ENCODE measurements at regions of chr9 and their contacts with region 1.

Region 1: GRCh38 chr9:121213136-121213806 is 11.6 kb upstream of the RAB14 start:
- DNase-seq: peak; percentile 87
- ATAC-seq: peak; percentile 99
- H3K4me3 ChIP-seq: no peak overlapping the region
- H3K27ac ChIP-seq: no peak overlapping the region
- H3K4me1 ChIP-seq: no peaks in the 10 kb centered on the region
- H3K27me3 ChIP-seq: no peaks in the 10 kb centered on the region
- CTCF ChIP-seq: peak; percentile 93

Region 2: DNA sequence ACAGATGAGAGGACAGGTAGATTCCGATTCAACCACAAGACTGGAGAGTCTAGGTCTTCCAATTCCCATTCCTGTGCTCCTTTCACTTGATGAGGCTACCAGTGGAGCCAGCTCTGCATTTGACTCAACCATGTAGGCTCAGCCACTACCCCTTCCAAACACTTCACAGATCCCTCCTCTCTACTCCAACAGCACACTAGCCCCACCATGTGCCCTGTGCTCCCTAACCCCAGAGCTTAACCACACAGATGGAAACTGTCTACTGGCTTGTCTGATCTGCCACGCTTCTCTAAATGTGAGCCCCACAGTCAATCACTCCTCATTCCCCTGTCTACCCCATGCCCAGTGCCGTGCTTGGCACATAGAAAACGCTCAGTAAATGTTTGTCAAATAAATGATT is 1141.5 kb before region 1 on chr9:
- CTCF ChIA-PET with region 1: no interaction called
- POLR2A ChIA-PET with region 1: no interaction called
- intact Hi-C with region 1: no loop called
- DNase-seq: no peak
- ATAC-seq: no peak
- H3K4me3 ChIP-seq: no peak overlapping the region
- H3K27ac ChIP-seq: no peak overlapping the region
- H3K4me1 ChIP-seq: no peaks in the 10 kb centered on the region
- H3K27me3 ChIP-seq: no peaks in the 10 kb centered on the region
- CTCF ChIP-seq: no peak

Region 3: GRCh38 chr9:121278535-121279261 is 65.4 kb after region 1 on chr9:
- CTCF ChIA-PET with region 1: interaction called, 4 read pairs
- POLR2A ChIA-PET with region 1: no interaction called
- intact Hi-C with region 1: loop called (anchors 1 kb)
- DNase-seq: peak; percentile 87
- ATAC-seq: peak; percentile 66
- H3K4me3 ChIP-seq: 0 out of 2 replicates have a peak overlapping the region, but pooled peaks have one; percentile 10
- H3K27ac ChIP-seq: peak overlapping the region; percentile 71
- H3K4me1 ChIP-seq: peaks cover 59% of the 10 kb centered on the region
- H3K27me3 ChIP-seq: no peaks in the 10 kb centered on the region
- CTCF ChIP-seq: peak; percentile 79

Region 4: DNA sequence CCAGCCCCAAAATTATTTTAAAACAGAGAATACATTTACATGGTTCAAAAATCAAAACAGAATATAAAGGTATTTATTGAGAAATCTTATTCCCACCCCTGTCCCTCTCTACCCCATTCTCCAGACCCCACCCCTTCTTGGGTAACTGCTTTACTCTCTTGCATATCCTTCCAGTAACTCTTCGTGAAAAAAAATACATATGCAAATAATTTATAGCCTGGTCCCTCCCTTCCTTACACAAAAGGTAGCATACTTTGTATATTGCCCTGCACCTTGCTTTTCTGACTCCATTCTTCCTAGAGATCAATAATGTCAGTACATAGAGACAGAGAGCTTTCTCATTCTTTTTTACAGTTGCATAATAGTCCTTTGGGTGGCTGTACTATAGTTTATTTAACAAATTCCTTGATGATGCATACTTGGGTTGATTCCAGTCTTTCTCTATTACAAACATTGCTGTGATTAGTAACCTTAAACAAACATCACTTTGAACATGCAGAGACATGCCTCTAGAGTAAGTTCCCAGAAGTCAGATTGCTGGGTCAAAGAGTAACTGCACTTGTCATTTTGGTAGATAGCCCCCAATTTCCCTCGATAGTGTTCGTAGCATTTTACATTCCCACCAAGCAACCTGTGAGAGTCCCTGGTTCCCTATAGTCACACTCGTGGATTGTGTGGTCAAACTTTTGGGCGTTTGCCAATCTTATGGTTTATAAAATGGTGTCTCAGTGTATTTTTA is 108.9 kb after region 1 on chr9:
- CTCF ChIA-PET with region 1: no interaction called
- POLR2A ChIA-PET with region 1: no interaction called
- intact Hi-C with region 1: loop called (anchors 1 kb)
- DNase-seq: peak; percentile 94
- ATAC-seq: peak; percentile 75
- H3K4me3 ChIP-seq: peak overlapping the region; percentile 46; the same call in 1 of the 2 replicates
- H3K27ac ChIP-seq: peak overlapping the region; percentile 91
- H3K4me1 ChIP-seq: peaks cover 8% of the 10 kb centered on the region
- H3K27me3 ChIP-seq: no peaks in the 10 kb centered on the region
- CTCF ChIP-seq: no peak